ENCODE measurements at regions of chr14 and their contacts with region 1.

Region 1: DNA sequence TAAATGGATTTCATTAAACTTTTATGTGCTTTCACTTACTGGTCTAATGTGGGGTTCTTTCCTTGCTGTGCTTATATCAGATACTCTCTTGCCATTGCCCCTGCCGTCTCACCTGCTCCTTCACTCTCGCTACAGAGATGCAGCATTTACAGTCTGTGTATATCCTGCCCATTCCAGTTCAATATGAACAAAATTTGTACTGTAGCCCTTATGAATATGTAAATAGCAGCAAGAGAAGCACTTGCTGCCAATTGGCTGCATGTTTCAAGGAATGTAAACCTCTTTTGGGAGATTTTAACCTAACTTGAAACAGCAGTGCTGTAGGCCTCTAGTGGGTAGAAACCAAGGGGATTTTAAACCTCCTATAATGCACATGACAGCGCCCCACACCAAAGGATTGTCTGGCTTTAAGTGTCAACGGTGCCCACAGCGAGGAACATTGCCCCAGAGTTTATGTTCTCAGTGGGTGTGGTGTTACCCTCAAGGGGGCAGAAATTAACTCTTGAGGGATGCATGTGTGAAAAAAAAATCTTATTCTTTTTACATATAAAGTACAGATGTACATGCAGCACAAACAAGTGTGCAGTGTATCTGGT is 19.1 kb downstream of the PCNX1 start:
- DNase-seq: no peak
- ATAC-seq: peak; percentile 43
- H3K4me3 Mint-ChIP-seq: no peak overlapping the region
- H3K27ac Mint-ChIP-seq: peak overlapping the region; percentile 9
- H3K4me1 Mint-ChIP-seq: peaks cover 45% of the 10 kb centered on the region
- H3K27me3 Mint-ChIP-seq: no peaks in the 10 kb centered on the region

Region 2: DNA sequence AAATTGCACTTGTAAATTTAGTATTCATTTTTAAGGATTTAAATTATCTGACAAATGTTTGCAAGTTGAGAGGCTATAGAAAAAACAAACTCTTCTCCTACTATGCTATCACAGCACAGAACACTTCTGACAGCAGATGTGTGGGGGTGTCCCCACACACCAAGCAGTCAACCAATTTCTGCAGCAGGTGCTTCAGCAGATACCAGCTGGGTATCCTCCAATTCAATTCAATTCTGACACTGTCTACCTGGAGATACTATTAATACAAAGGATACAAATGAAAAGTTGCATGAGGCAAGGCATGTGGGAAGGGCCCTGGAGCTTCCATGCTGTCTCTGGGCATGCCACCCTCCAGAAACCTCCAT is 16.0 kb after region 1 on chr14:
- CTCF ChIA-PET with region 1: interaction called, 10 read pairs
- POLR2A ChIA-PET with region 1: no interaction called
- DNase-seq: no peak
- ATAC-seq: no peak
- H3K4me3 Mint-ChIP-seq: no peak overlapping the region
- H3K27ac Mint-ChIP-seq: no peak overlapping the region
- H3K4me1 Mint-ChIP-seq: peaks cover 52% of the 10 kb centered on the region
- H3K27me3 Mint-ChIP-seq: no peaks in the 10 kb centered on the region

Region 3: GRCh38 chr14:70962935-70963334 is 36.6 kb after region 1 on chr14:
- CTCF ChIA-PET with region 1: no interaction called
- POLR2A ChIA-PET with region 1: no interaction called
- DNase-seq: no peak
- ATAC-seq: no peak
- H3K4me3 Mint-ChIP-seq: no peak overlapping the region
- H3K27ac Mint-ChIP-seq: no peak overlapping the region
- H3K4me1 Mint-ChIP-seq: peaks cover 5% of the 10 kb centered on the region
- H3K27me3 Mint-ChIP-seq: no peaks in the 10 kb centered on the region

Region 4: GRCh38 chr14:71119075-71119474 is 192.7 kb after region 1 on chr14:
- CTCF ChIA-PET with region 1: no interaction called
- POLR2A ChIA-PET with region 1: no interaction called
- DNase-seq: no peak
- ATAC-seq: no peak
- H3K4me3 Mint-ChIP-seq: no peak overlapping the region
- H3K27ac Mint-ChIP-seq: no peak overlapping the region
- H3K4me1 Mint-ChIP-seq: no peaks in the 10 kb centered on the region
- H3K27me3 Mint-ChIP-seq: no peaks in the 10 kb centered on the region

Region 5: DNA sequence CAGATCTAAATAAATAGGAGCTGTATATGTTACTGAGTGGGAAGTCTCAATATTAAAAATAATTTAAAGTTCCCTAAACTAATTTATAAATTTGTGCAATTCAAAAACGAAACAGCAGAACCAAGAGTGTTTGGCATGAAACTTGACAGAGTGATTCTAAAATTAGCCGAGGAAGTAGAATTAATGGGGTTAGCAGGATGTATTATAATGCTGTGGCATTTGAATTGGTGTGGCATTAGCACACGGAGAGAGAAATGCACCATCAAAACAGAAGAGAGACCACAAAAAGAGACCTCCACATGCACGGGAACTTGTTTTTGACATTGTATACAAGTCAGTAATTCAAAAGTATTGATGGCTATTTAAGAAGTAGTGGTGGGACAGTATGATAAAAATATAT is 639.9 kb after region 1 on chr14:
- CTCF ChIA-PET with region 1: no interaction called
- POLR2A ChIA-PET with region 1: no interaction called
- DNase-seq: no peak
- ATAC-seq: peak; percentile 53
- H3K4me3 Mint-ChIP-seq: peak overlapping the region; percentile 21
- H3K27ac Mint-ChIP-seq: peak overlapping the region; percentile 54
- H3K4me1 Mint-ChIP-seq: peaks cover 18% of the 10 kb centered on the region
- H3K27me3 Mint-ChIP-seq: no peaks in the 10 kb centered on the region